Caco-2 (cell line): ENCODE measurements at regions of chr14 and their contacts with region 1.

Region 1: DNA sequence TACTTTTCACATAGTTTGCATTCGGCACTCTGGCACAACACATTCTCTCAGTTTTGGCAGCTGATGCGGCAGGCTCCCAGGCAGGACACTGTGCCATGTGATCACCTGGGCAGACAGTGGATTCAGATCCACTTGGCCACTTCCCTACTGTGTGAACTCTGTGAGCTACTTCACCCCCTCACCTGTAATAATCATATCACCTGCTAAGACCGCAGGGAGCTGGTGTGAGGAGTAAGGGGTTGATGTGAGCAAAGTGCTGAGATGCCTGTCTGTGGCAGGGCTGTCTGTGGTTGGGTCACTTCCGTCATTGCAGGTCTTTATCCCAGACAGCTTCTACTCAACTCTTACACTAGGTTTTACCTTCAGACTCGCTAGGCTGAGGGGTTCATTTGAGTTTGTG is 50.4 kb upstream of the AMN start:
- DNase-seq: no peak
- H3K4me3 ChIP-seq: no peak overlapping the region
- H3K4me3 Mint-ChIP-seq: no peak overlapping the region
- H3K27ac Mint-ChIP-seq: no peak overlapping the region
- H3K4me1 ChIP-seq: peaks cover 14% of the 10 kb centered on the region
- H3K4me1 Mint-ChIP-seq: peaks cover 22% of the 10 kb centered on the region
- H3K27me3 ChIP-seq: no peaks in the 10 kb centered on the region
- H3K27me3 Mint-ChIP-seq: no peaks in the 10 kb centered on the region
- CTCF ChIP-seq: no peak

Region 2: GRCh38 chr14:102795060-102795925 is 76.7 kb before region 1 on chr14:
- CTCF ChIA-PET with region 1: no interaction called
- POLR2A ChIA-PET with region 1: no interaction called
- intact Hi-C with region 1: no loop called
- DNase-seq: peak; percentile 56 to 65
- H3K4me3 ChIP-seq: no peak overlapping the region
- H3K4me3 Mint-ChIP-seq: no peak overlapping the region
- H3K27ac Mint-ChIP-seq: peak overlapping the region; percentile 77
- H3K4me1 ChIP-seq: peaks cover 12% of the 10 kb centered on the region
- H3K4me1 Mint-ChIP-seq: no peaks in the 10 kb centered on the region
- H3K27me3 ChIP-seq: no peaks in the 10 kb centered on the region
- H3K27me3 Mint-ChIP-seq: no peaks in the 10 kb centered on the region
- CTCF ChIP-seq: no peak

Region 3: GRCh38 chr14:102849526-102850379 is 22.3 kb before region 1 on chr14:
- CTCF ChIA-PET with region 1: no interaction called
- POLR2A ChIA-PET with region 1: no interaction called
- intact Hi-C with region 1: loop called (anchors 2 kb)
- DNase-seq: peak in 1 of 2 experiments; percentile 47
- H3K4me3 ChIP-seq: no peak overlapping the region
- H3K4me3 Mint-ChIP-seq: peak overlapping the region; percentile 56
- H3K27ac Mint-ChIP-seq: peak overlapping the region; percentile 71
- H3K4me1 ChIP-seq: peaks cover 10% of the 10 kb centered on the region; the same call in 1 of the 2 replicates
- H3K4me1 Mint-ChIP-seq: peaks cover 13% of the 10 kb centered on the region
- H3K27me3 ChIP-seq: no peaks in the 10 kb centered on the region
- H3K27me3 Mint-ChIP-seq: no peaks in the 10 kb centered on the region
- CTCF ChIP-seq: no peak

Region 4: GRCh38 chr14:102857444-102857843 is 14.6 kb before region 1 on chr14:
- CTCF ChIA-PET with region 1: no interaction called
- POLR2A ChIA-PET with region 1: interaction called, 3 read pairs
- intact Hi-C with region 1: loop called (anchors 1 kb)
- DNase-seq: peak; percentile 62 to 70
- H3K4me3 ChIP-seq: no peak overlapping the region
- H3K4me3 Mint-ChIP-seq: no peak overlapping the region
- H3K27ac Mint-ChIP-seq: peak overlapping the region; percentile 69
- H3K4me1 ChIP-seq: peaks cover 18% of the 10 kb centered on the region; the same call in 1 of the 2 replicates
- H3K4me1 Mint-ChIP-seq: peaks cover 13% of the 10 kb centered on the region
- H3K27me3 ChIP-seq: no peaks in the 10 kb centered on the region
- H3K27me3 Mint-ChIP-seq: no peaks in the 10 kb centered on the region
- CTCF ChIP-seq: no peak